PC-3 (cell line): ENCODE measurements at regions of chr1 and their contacts with region 1.

Region 1: DNA sequence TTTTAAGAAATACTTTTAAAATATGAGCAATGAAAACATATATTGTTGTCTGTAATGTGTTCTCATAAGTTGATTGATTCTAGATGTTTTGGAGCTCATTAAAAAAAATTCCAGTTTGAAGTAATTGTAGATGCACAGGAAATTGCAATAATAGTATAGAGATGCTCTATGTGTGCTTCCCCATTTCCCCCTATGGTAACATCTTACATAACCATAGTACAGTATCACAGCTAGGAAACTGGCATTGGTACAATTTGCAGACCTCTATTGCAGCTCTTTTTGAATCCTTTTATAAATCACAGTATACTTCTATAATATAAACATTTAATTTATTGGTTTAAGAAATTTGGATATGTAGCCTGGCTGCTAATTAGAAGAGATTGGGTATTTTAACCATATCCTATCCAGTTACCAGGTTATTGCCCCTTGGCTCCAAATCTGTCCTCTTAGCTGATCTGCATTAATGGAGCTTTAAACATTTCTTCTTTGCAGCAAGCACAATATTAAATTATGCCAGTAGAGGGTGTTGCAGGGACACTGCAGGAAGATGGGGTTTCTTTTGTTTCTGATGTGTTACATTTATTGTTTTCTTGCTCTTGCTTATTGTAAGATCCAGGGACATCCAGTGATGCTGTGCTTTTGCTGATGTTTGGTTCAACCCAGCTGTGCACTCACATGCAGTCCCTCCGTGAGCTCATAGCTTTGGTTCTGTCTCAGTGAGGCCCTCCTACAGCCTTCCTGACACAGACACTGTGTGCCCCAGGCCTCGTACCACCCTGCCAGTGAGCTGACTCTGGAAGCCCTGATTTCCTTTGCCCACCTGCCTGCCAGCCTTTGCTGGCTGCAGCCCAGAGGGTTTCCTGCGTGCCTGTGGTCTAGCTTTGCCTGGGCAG is 103.3 kb downstream of the RABGAP1L start:
- DNase-seq: peak; percentile 61
- ATAC-seq: peak; percentile 27; the same call in 1 of the 2 replicates
- H3K4me3 ChIP-seq: no peak overlapping the region
- H3K27ac ChIP-seq: no peak overlapping the region
- H3K4me1 ChIP-seq: no peaks in the 10 kb centered on the region
- H3K27me3 ChIP-seq: no peaks in the 10 kb centered on the region
- CTCF ChIP-seq: peak; percentile 68

Region 2: GRCh38 chr1:174225499-174226204 is 36.9 kb before region 1 on chr1:
- CTCF ChIA-PET with region 1: no interaction called
- POLR2A ChIA-PET with region 1: no interaction called
- intact Hi-C with region 1: no loop called
- DNase-seq: no peak
- ATAC-seq: no peak
- H3K4me3 ChIP-seq: no peak overlapping the region
- H3K27ac ChIP-seq: no peak overlapping the region
- H3K4me1 ChIP-seq: no peaks in the 10 kb centered on the region; the same call in 1 of the 2 replicates
- H3K27me3 ChIP-seq: no peaks in the 10 kb centered on the region
- CTCF ChIP-seq: no peak

Region 3: GRCh38 chr1:174726167-174726879 is 463.7 kb after region 1 on chr1:
- CTCF ChIA-PET with region 1: interaction called, 18 read pairs
- POLR2A ChIA-PET with region 1: no interaction called
- intact Hi-C with region 1: loop called (anchors 1 kb)
- DNase-seq: peak; percentile 37
- ATAC-seq: peak; percentile 43; the same call in 1 of the 2 replicates
- H3K4me3 ChIP-seq: no peak overlapping the region
- H3K27ac ChIP-seq: no peak overlapping the region
- H3K4me1 ChIP-seq: no peaks in the 10 kb centered on the region
- H3K27me3 ChIP-seq: no peaks in the 10 kb centered on the region
- CTCF ChIP-seq: peak; percentile 61